Dendritic cell treated with granulocyte-macrophage colony-stimulating factor and Interleukin-4, amounts not matched to agents 40 ng/mL and 50 ng/mL, for 4 days (primary cell): ENCODE measurements at regions of chr3 and their contacts with region 1.

Region 1: DNA sequence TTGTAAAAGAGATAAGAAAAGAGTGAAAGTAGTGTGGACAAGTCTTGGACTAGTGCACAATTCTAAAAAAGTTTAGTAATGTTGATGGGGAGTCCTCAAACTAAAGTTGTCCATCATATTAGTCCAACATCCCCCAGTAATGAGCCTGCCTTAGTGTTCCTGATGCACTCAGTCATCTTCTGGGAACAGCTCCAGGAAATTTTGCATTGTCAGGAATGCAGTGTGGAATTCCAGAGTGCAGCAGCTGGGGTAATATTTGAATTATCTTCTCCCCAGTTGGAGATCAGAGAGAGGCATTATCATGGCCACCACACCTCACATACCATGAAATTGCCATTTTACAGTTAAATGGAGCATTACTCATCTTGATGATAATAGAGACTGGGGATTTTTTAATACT is 528.8 kb upstream of the NAALADL2 start:
- H3K4me3 Mint-ChIP-seq: no peak overlapping the region
- H3K27ac Mint-ChIP-seq: peak overlapping the region; percentile 87
- H3K4me1 Mint-ChIP-seq: peaks cover 34% of the 10 kb centered on the region
- H3K27me3 Mint-ChIP-seq: no peaks in the 10 kb centered on the region

Region 2: GRCh38 chr3:174295306-174296092 is 34.8 kb before region 1 on chr3:
- intact Hi-C with region 1: no loop called
- H3K4me3 Mint-ChIP-seq: no peak overlapping the region
- H3K27ac Mint-ChIP-seq: no peak overlapping the region
- H3K4me1 Mint-ChIP-seq: no peaks in the 10 kb centered on the region
- H3K27me3 Mint-ChIP-seq: no peaks in the 10 kb centered on the region

Region 3: GRCh38 chr3:174397848-174398247 is 67.5 kb after region 1 on chr3:
- intact Hi-C with region 1: no loop called
- H3K4me3 Mint-ChIP-seq: no peak overlapping the region
- H3K27ac Mint-ChIP-seq: no peak overlapping the region
- H3K4me1 Mint-ChIP-seq: no peaks in the 10 kb centered on the region
- H3K27me3 Mint-ChIP-seq: no peaks in the 10 kb centered on the region

Region 4: GRCh38 chr3:174439331-174440252 is 109.3 kb after region 1 on chr3:
- intact Hi-C with region 1: loop called (anchors 2 kb)
- H3K4me3 Mint-ChIP-seq: peak overlapping the region; percentile 81
- H3K27ac Mint-ChIP-seq: peak overlapping the region; percentile 83
- H3K4me1 Mint-ChIP-seq: peaks cover 18% of the 10 kb centered on the region
- H3K27me3 Mint-ChIP-seq: peaks cover 14% of the 10 kb centered on the region